ENCODE measurements at regions of chr15 and their contacts with region 1.

Region 1: DNA sequence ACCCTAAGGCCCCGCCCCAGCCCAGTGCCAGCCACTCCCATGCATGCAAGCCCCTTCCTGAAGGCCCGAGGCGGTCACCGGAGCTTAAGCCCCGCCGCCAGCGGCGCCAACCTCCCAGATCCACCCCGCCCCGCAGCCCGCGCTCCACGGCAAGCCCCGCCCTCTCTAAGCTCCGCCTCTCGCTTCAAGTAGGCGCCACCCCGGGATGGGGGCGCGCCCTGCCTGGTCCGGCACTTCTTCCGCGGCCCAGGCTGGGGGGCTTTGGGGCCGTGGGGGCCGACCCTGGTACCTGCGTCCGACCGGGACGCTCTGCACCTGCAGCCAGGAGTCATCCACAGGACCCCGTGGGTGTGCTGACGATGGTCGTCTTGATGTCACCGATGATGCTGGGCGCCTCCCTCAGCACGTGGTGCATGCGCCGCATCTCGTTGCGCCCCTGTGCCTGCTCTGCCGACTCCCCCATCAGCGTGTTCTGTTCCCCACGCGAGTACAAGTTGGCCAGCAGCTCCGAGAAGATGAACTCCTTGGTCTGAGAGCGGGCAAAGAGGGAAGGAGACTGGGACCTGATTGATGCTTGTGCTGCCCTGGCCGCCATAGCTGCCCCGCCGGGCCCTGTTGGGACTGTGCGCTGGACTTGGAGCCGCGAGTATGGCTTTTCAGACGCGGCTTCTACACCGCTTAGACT is 26.1 kb upstream of the CSPG4 start:
- DNase-seq: peak; percentile 97
- ATAC-seq: peak; percentile 99

Region 2: GRCh38 chr15:75639709-75640482 is 98.9 kb before region 1 on chr15 and contains the start of gene IMP3:
- intact Hi-C with region 1: loop called (anchors 10 kb)
- DNase-seq: peak; percentile 97
- ATAC-seq: peak; percentile 98
- total RNA-seq, gene IMP3: 41.7 TPM

Region 3: DNA sequence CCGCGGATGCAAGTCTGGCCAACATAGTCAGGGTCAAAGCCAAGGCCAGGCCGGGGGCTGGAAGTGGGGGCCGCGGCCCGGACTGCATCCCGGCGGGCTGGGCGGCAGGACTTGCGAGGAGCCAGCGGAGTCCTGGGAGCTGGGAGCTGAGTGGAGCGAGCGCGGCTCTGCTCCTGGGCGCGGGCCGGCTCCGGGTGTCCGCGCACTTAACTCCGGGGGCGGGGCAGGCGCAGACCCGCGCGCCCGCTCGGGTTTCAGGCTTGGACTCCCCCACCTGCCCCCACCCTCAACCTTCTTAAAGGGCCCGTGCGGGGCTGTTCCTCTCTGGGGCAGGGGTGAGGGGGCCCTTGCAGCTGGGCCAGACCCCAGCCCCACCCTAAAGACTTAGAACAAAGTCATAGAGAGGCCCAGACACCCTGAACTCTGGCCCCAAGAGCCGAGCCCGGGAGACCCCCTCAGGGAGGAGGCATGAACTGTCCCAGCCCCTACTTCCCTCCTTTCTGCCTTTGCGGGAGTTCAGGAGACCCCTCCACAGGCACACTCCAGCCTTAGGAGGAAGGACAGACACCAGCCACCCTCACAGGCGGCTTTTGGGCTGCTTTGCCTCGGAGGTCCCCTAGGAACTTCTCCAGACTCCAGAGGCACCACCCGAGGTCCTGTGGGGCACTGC is 26.0 kb before region 1 on chr15 and contains the start of gene CSPG4:
- intact Hi-C with region 1: no loop called
- DNase-seq: peak; percentile 79
- ATAC-seq: peak; percentile 78
- total RNA-seq, gene CSPG4: 5.2 TPM

Region 4: GRCh38 chr15:76115888-76116885 is 377.4 kb after region 1 on chr15:
- intact Hi-C with region 1: no loop called
- DNase-seq: no peak
- ATAC-seq: no peak

Measured in Right ventricle myocardium superior (tissue), 1 donor.